ENCODE measurements at regions of chr12 and their contacts with region 1.

Region 1: GRCh38 chr12:108349278-108349688 is 10.2 kb upstream of the CMKLR1 start:
- DNase-seq: no peak
- H3K4me3 ChIP-seq: no peak overlapping the region
- H3K27ac ChIP-seq: no peak overlapping the region
- H3K4me1 ChIP-seq: no peaks in the 10 kb centered on the region
- H3K27me3 ChIP-seq: no peaks in the 10 kb centered on the region
- CTCF ChIP-seq: no peak
- POLR2A ChIP-seq: no peak

Region 2: DNA sequence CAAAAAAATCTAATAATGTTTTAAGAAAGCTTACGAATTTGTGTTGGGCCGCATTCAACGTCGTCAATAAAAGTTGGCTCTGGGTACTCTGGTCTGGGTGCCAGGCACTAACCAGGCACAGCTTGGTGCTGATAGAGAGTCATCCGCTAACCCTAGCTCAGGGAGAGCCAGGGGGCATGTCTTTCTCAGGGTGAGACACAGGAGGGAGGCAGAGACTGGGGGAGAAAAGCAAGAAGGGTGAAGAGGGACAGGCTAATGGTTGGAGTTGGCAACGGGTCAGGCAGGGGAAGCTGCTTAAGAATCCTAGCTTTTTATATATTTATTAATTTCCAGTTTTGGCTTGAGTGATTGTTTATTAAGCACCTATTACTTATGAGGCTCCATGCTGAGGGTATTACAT is 115.1 kb before region 1 on chr12:
- intact Hi-C with region 1: loop called (anchors 5 kb)
- DNase-seq: no peak
- H3K4me3 ChIP-seq: no peak overlapping the region
- H3K27ac ChIP-seq: no peak overlapping the region
- H3K4me1 ChIP-seq: no peaks in the 10 kb centered on the region
- H3K27me3 ChIP-seq: peaks cover 0 to 3% of the 10 kb centered on the region in 2 donors
- CTCF ChIP-seq: no peak
- POLR2A ChIP-seq: no peak

Region 3: GRCh38 chr12:108514973-108515814 is 165.9 kb after region 1 on chr12 and contains the start of gene FICD:
- intact Hi-C with region 1: loop called (anchors 10 kb)
- DNase-seq: peak; percentile 100
- H3K4me3 ChIP-seq: peak within 1 kb of the TSS; percentile 87 to 92 (median 87)
- H3K27ac ChIP-seq: peak within 1 kb of the TSS; percentile 77 to 79
- H3K4me1 ChIP-seq: peaks cover 0 to 8% of the 10 kb centered on the region in 2 donors
- H3K27me3 ChIP-seq: no peaks in the 10 kb centered on the region
- CTCF ChIP-seq: no peak
- POLR2A ChIP-seq: no peak
- total RNA-seq, gene FICD: 7.0 to 8.5 (median 8.0) TPM

Measured in breast epithelium (tissue), 4 donors.